H1 (cell line): ENCODE measurements at regions of chr4 and their contacts with region 1.

Region 1: GRCh38 chr4:27000820-27001219 is 140.2 kb downstream of the STIM2 start:
- DNase-seq: no peak
- H3K4me3 ChIP-seq: no peak overlapping the region
- H3K27ac ChIP-seq: no peak overlapping the region
- H3K4me1 ChIP-seq: peaks cover 0 to 2% (median 0%) of the 10 kb centered on the region in 4 experiments; a peak in 1 of 7 replicates
- H3K27me3 ChIP-seq: no peaks in the 10 kb centered on the region
- CTCF ChIP-seq: peak in 1 of 3 experiments; percentile 39; a peak in 1 of 4 replicates
- EP300 ChIP-seq: no peak
- POLR2A ChIP-seq: no peak
- RAD21 ChIP-seq: peak; percentile 35 to 39

Region 2: GRCh38 chr4:26787461-26788340 is 213.1 kb before region 1 on chr4:
- CTCF ChIA-PET with region 1: interaction called, 10 read pairs
- POLR2A ChIA-PET with region 1: no interaction called
- DNase-seq: peak; percentile 62 to 64
- H3K4me3 ChIP-seq: no peak overlapping the region
- H3K27ac ChIP-seq: no peak overlapping the region
- H3K4me1 ChIP-seq: peaks cover 0 to 3% (median 0%) of the 10 kb centered on the region in 4 experiments; a peak in 3 of 7 replicates
- H3K27me3 ChIP-seq: no peaks in the 10 kb centered on the region
- CTCF ChIP-seq: peak; percentile 54 to 72 (median 59)
- EP300 ChIP-seq: no peak
- POLR2A ChIP-seq: no peak
- RAD21 ChIP-seq: peak; percentile 84 to 86

Region 3: GRCh38 chr4:27020203-27020602 is 19.4 kb after region 1 on chr4:
- CTCF ChIA-PET with region 1: interaction called, 12 read pairs
- POLR2A ChIA-PET with region 1: no interaction called
- DNase-seq: no peak
- H3K4me3 ChIP-seq: no peak overlapping the region
- H3K27ac ChIP-seq: no peak overlapping the region
- H3K4me1 ChIP-seq: no peaks in the 10 kb centered on the region
- H3K27me3 ChIP-seq: no peaks in the 10 kb centered on the region
- CTCF ChIP-seq: no peak
- EP300 ChIP-seq: no peak
- POLR2A ChIP-seq: no peak
- RAD21 ChIP-seq: no peak

Region 4: DNA sequence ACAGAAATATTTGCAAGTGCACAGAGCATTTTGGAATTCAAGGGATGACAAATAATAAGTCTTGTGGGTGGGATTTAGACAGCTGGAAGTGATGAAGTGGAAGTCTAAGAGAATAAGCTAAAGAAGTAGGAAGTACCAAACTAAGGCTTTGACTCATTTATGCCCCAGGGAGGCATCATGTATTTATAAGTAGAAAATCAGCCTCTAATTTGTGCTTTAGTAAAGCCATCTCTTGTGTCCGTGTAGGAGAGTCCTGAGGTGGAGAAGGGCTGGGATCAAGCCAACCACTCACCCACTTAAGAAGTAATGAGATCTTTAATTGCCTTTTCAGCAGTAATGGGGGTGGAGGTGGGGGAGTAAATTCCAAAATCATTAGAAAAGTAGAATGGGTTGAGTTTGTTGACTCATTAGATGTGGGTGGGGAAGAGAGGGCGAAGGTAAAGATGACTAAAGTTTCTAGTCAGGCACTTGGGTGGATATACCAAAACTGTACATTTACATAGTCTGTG is 216.5 kb after region 1 on chr4:
- CTCF ChIA-PET with region 1: no interaction called
- POLR2A ChIA-PET with region 1: no interaction called
- DNase-seq: no peak
- H3K4me3 ChIP-seq: no peak overlapping the region
- H3K27ac ChIP-seq: no peak overlapping the region
- H3K4me1 ChIP-seq: no peaks in the 10 kb centered on the region
- H3K27me3 ChIP-seq: no peaks in the 10 kb centered on the region
- CTCF ChIP-seq: no peak
- EP300 ChIP-seq: no peak
- POLR2A ChIP-seq: no peak
- RAD21 ChIP-seq: no peak